BJ (cell line): ENCODE measurements at regions of chr19 and their contacts with region 1.

Region 1: DNA sequence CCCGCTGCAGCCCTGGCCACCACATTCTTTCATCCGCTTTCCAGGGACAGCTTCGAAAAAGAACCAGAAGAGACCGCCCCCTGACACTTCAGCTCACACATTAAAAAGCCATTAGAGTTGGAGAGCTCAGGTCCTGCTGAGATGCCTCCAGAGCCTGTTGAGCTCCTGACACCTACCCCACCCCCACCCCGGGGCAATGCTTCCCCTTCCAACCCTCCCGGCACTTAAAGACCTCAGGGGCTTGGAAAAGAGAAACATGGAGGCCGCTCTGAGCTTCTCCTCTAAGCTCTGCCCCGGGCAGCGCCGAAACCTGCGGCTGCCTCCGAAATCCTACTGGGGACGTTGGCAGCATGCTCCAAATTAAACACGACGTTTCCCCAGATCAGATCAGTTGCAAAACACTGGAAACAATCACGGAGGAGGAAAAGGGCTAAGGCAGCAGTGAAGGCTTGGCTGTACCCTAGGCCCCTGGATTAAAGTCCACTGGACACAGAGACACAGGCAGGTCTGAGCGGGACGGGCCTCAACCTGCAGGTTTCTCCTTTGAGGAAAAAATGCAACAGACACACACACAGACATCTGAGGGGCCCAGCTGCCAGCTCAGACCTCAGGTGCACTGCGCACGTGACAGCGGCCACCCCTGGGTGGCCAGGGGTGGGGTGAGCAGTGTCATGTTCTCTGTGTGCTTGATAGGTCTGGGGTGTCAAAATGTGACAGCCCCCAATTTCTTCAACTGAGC is 9.6 kb downstream of the SH3GL1 start:
- DNase-seq: no peak
- H3K4me3 ChIP-seq: peak overlapping the region; percentile 3; the same call in 1 of the 2 replicates
- H3K27me3 ChIP-seq: no peaks in the 10 kb centered on the region
- CTCF ChIP-seq: no peak

Region 2: GRCh38 chr19:4304530-4305252 is 86.0 kb before region 1 on chr19 and contains the start of gene FSD1:
- CTCF ChIA-PET with region 1: no interaction called
- POLR2A ChIA-PET with region 1: interaction called, 24 read pairs
- DNase-seq: no peak
- H3K4me3 ChIP-seq: peak within 1 kb of the TSS; percentile 64
- H3K27me3 ChIP-seq: no peaks in the 10 kb centered on the region
- CTCF ChIP-seq: no peak
- polyA plus RNA-seq, gene FSD1: 3.9 and 11.9 TPM in 2 replicates

Region 3: GRCh38 chr19:4369888-4370260 is 20.9 kb before region 1 on chr19:
- CTCF ChIA-PET with region 1: interaction called, 19 read pairs
- POLR2A ChIA-PET with region 1: interaction called, 20 read pairs
- DNase-seq: no peak
- H3K4me3 ChIP-seq: no peak overlapping the region
- H3K27me3 ChIP-seq: no peaks in the 10 kb centered on the region
- CTCF ChIP-seq: peak; percentile 52

Region 4: GRCh38 chr19:4375164-4376027 is 15.3 kb before region 1 on chr19:
- CTCF ChIA-PET with region 1: interaction called, 19 read pairs
- POLR2A ChIA-PET with region 1: no interaction called
- DNase-seq: no peak
- H3K4me3 ChIP-seq: no peak overlapping the region
- H3K27me3 ChIP-seq: no peaks in the 10 kb centered on the region
- CTCF ChIP-seq: peak; percentile 56